Lower leg skin (tissue), 4 donors: ENCODE measurements at regions of chr1 and their contacts with region 1.

Region 1: DNA sequence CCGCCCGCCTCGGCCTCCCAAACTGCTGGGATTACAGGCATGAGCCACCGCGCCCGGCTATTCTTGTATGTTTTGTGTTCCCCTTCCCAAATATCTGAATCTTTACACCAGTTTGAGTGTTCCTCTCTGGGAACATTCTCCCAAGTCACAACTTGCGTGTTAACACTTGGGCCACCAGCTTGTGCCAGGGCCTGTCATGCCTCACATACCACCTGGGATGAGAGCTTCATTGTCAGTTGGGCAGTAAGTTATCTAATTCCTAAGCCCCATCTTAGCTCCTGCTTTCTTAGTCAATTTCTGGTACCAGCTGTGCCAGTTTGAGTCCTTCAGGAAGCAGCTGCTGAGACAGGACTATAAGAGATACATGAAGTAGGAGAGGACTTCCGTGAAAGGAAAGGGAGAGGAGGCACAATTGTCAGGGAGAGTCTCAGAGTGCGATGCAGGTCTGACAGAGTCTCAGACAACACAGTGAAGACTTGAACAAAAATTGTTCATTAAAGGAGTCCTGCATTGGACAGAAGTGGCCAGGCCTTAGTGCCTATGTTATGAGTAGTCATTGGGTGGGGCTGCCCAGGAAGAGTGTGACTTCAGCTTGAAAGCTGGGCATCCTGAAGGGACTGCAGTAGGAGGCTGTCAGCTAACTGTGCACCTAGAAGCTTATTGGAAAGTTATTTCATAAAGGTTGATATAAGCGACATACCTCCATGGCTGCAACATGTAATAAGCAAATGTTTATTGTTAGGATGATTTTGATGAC is 17.3 kb downstream of the ZFYVE9 start:
- DNase-seq: no peak
- H3K4me3 ChIP-seq: no peak overlapping the region
- CTCF ChIP-seq: no peak
- POLR2A ChIP-seq: no peak

Region 2: GRCh38 chr1:51878616-51879336 is 280.4 kb before region 1 on chr1 and contains the start of gene NRDC:
- intact Hi-C with region 1: no loop called
- DNase-seq: peak; percentile 100
- H3K4me3 ChIP-seq: peak within 1 kb of the TSS; percentile 83
- CTCF ChIP-seq: no peak
- POLR2A ChIP-seq: no peak
- total RNA-seq, gene NRDC: 90.3 to 113 (median 103) TPM

Region 3: GRCh38 chr1:53462769-53463501 is 1303.7 kb after region 1 on chr1:
- intact Hi-C with region 1: loop called (anchors 5 kb)
- DNase-seq: peak in 1 of 2 donors; percentile 60
- H3K4me3 ChIP-seq: no peak overlapping the region
- CTCF ChIP-seq: no peak
- POLR2A ChIP-seq: no peak